ENCODE measurements at regions of chr14 and their contacts with region 1.

Region 1: DNA sequence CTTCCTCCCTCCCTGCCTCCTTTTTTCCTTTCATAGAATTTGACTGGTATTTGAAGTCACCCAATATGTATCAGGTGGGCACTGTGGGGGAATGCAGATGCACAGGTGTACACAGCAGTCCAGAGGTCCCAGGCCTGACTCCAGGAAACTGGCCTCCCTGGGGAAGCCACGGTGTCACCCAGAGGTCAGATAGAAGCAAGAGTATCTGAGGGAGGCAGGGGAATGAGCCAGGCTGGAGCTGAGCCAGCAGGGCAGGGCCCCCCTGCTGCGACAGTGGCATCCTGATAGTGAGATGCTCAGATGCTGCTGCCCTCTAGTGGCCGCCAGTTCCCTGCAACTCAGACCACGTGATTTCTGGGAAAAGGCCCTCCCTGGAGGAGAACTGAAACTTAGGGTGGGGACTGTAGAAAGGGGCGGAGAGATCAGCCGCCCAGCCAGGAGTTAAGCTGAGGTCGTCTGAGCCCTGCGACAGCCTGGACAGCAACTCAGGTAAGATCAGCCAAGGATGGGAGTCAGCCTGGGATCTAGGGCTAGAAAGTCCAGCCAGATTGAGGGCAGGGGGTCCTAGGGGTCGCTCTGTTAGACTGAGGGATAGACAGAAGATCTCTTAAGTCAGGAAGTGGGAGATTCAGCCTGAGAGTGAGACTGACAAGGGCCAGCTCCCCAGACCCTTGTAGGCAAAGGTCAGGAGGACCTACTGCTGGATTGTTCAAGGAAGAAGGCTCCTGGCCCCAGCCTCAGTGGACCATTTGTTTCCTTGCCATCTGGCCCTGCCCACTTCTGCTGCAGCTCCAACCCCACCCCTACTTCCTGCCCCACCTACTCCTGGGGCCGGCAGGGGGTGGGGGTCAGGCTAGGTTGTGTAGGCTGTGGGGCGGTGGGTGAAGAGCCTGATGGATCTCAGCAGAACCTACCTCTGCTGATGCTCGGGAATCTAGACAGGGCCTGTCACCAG is at the start of gene IRF9:
- DNase-seq: peak; percentile 94 to 97 (median 95)
- H3K4me3 ChIP-seq: peak within 1 kb of the TSS; percentile 73 to 97
- H3K4me3 Mint-ChIP-seq: peak within 1 kb of the TSS; percentile 96 to 100 (median 99)
- H3K27ac ChIP-seq: peak within 1 kb of the TSS; percentile 90
- H3K27ac Mint-ChIP-seq: peak within 1 kb of the TSS; percentile 97 to 100 (median 99)
- H3K4me1 ChIP-seq: peaks cover 50% of the 10 kb centered on the region
- H3K4me1 Mint-ChIP-seq: peaks cover 29 to 60% (median 48%) of the 10 kb centered on the region in 4 donors
- H3K27me3 ChIP-seq: no peaks in the 10 kb centered on the region
- H3K27me3 Mint-ChIP-seq: no peaks in the 10 kb centered on the region
- total RNA-seq, gene IRF9: 154 to 157 TPM

Region 2: GRCh38 chr14:22177870-22178269 is 1983.3 kb before region 1 on chr14:
- CTCF ChIA-PET with region 1: no interaction called
- POLR2A ChIA-PET with region 1: no interaction called
- intact Hi-C with region 1: no loop called
- DNase-seq: peak in 2 of 5 donors; percentile 21 to 25
- H3K4me3 ChIP-seq: no peak overlapping the region
- H3K4me3 Mint-ChIP-seq: peak overlapping the region in 5 of 8 donors; percentile 31 to 72 (median 64)
- H3K27ac ChIP-seq: no peak overlapping the region
- H3K27ac Mint-ChIP-seq: peak overlapping the region in 5 of 7 donors; percentile 22 to 82 (median 55)
- H3K4me1 ChIP-seq: peaks cover 8% of the 10 kb centered on the region
- H3K4me1 Mint-ChIP-seq: peaks cover 0 to 17% (median 11%) of the 10 kb centered on the region in 4 donors
- H3K27me3 ChIP-seq: no peaks in the 10 kb centered on the region
- H3K27me3 Mint-ChIP-seq: no peaks in the 10 kb centered on the region

Region 3: GRCh38 chr14:23621204-23621931 is 539.8 kb before region 1 on chr14:
- CTCF ChIA-PET with region 1: no interaction called
- POLR2A ChIA-PET with region 1: no interaction called
- intact Hi-C with region 1: no loop called
- DNase-seq: no peak
- H3K4me3 ChIP-seq: no peak overlapping the region
- H3K4me3 Mint-ChIP-seq: peak overlapping the region in 1 of 8 donors; percentile 37
- H3K27ac ChIP-seq: no peak overlapping the region
- H3K27ac Mint-ChIP-seq: no peak overlapping the region
- H3K4me1 ChIP-seq: no peaks in the 10 kb centered on the region
- H3K4me1 Mint-ChIP-seq: no peaks in the 10 kb centered on the region
- H3K27me3 ChIP-seq: no peaks in the 10 kb centered on the region
- H3K27me3 Mint-ChIP-seq: peaks cover 6 to 12% of the 10 kb centered on the region in 2 donors

Region 4: GRCh38 chr14:23929822-23930294 is 231.3 kb before region 1 on chr14:
- CTCF ChIA-PET with region 1: no interaction called
- POLR2A ChIA-PET with region 1: no interaction called
- intact Hi-C with region 1: no loop called
- DNase-seq: peak; percentile 67 to 73 (median 72)
- H3K4me3 ChIP-seq: no peak overlapping the region
- H3K4me3 Mint-ChIP-seq: no peak overlapping the region
- H3K27ac ChIP-seq: no peak overlapping the region
- H3K27ac Mint-ChIP-seq: no peak overlapping the region
- H3K4me1 ChIP-seq: no peaks in the 10 kb centered on the region
- H3K4me1 Mint-ChIP-seq: peaks cover 0 to 2% (median 0%) of the 10 kb centered on the region in 4 donors
- H3K27me3 ChIP-seq: no peaks in the 10 kb centered on the region
- H3K27me3 Mint-ChIP-seq: peaks cover 2 to 6% of the 10 kb centered on the region in 2 donors

Region 5: GRCh38 chr14:24058260-24058950 is 102.7 kb before region 1 on chr14:
- CTCF ChIA-PET with region 1: interaction called, 49 read pairs
- POLR2A ChIA-PET with region 1: interaction called, 18 read pairs
- intact Hi-C with region 1: loop called (anchors 1 kb)
- DNase-seq: peak; percentile 49 to 63 (median 61)
- H3K4me3 ChIP-seq: no peak overlapping the region
- H3K4me3 Mint-ChIP-seq: peak overlapping the region in 1 of 8 donors; percentile 59
- H3K27ac ChIP-seq: no peak overlapping the region
- H3K27ac Mint-ChIP-seq: peak overlapping the region in 6 of 7 donors; percentile 10 to 81 (median 36)
- H3K4me1 ChIP-seq: no peaks in the 10 kb centered on the region
- H3K4me1 Mint-ChIP-seq: peaks cover 2 to 8% (median 3%) of the 10 kb centered on the region in 4 donors
- H3K27me3 ChIP-seq: no peaks in the 10 kb centered on the region
- H3K27me3 Mint-ChIP-seq: peaks cover 2% of the 10 kb centered on the region in 2 donors

Region 6: DNA sequence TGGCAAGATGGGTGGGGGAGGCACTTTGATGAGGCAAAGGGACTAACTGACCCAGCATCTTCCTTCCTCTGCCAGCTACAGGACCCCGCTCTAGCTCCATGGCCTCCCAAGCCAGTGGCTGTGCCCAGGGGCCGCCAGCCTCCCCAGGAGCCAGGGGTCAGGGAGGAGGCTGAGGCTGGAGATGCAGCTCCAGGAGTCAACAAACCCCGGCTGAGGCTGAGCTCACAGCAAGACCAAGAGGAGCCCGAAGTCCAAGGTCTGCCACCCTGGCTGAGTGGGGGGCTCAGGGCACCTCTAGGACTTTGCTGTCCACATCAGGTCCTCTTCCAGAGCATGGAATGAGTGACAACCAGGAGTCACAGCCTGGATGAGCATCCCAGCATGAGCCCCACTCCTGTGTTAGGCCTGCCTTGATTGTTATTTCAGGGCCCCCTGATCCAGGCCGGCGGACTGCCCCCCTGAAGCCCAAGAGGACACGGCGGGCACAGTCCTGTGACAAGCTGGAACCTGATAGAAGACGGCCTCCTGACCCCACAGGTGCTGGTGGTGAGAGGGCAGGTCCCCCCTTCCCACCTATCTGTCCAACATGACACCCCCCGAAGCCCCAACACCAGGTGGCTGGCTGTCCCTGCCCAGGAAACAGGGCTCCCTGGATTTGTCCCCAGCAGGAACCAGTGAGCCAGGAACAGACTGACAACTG is 92.3 kb before region 1 on chr14:
- CTCF ChIA-PET with region 1: no interaction called
- POLR2A ChIA-PET with region 1: no interaction called
- intact Hi-C with region 1: no loop called
- DNase-seq: no peak
- H3K4me3 ChIP-seq: no peak overlapping the region
- H3K4me3 Mint-ChIP-seq: no peak overlapping the region
- H3K27ac ChIP-seq: no peak overlapping the region
- H3K27ac Mint-ChIP-seq: no peak overlapping the region
- H3K4me1 ChIP-seq: no peaks in the 10 kb centered on the region
- H3K4me1 Mint-ChIP-seq: peaks cover 0 to 2% (median 0%) of the 10 kb centered on the region in 4 donors
- H3K27me3 ChIP-seq: no peaks in the 10 kb centered on the region
- H3K27me3 Mint-ChIP-seq: peaks cover 7 to 14% of the 10 kb centered on the region in 2 donors

Region 7: DNA sequence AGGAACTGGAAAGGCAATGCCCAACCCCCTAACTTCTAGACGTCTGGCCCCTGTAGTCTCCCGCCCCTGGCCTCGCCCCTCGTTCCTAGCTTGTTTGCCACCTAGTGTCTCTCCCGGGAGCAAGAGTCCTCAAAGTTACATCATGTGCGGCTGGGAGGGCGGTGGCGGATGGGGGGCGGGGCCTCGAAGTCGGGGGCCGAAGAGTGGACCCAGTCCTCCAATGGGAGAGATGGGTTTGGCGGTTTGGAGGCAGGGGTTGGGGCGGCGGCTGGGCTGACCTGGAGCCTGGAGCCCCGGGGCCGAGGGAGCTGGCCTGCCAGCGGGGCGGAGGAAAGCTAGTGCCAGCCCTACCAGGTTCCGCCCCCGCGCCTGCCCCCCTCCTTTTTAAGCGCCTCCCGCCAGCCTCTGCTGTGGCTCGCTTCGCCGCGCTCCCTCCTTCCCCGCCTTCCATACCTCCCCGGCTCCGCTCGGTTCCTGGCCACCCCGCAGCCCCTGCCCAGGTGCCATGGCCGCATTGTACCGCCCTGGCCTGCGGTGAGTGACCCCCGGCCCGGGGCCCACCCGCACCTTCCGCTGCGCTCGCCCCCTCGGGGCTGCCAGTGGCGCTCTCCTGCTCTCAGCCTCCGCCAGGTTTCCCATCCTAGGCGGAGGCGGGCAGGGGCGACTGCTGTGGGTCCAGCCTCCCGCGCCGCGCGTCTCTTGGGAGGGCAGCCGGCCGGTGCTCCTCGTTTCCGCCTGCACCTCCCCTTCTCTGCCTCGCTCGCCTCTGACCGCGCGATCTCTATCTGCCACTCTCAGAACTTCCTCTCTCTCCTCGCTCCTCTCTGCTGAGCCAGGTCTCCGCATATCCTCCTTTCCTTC is 67.0 kb before region 1 on chr14 and contains the start of gene PCK2:
- CTCF ChIA-PET with region 1: interaction called, 15 read pairs
- POLR2A ChIA-PET with region 1: interaction called, 16 read pairs
- intact Hi-C with region 1: loop called (anchors 1 kb)
- DNase-seq: peak; percentile 53 to 75 (median 61)
- H3K4me3 ChIP-seq: peak within 1 kb of the TSS; percentile 82 to 90
- H3K4me3 Mint-ChIP-seq: peak within 1 kb of the TSS; percentile 91 to 100 (median 98)
- H3K27ac ChIP-seq: peak within 1 kb of the TSS; percentile 84
- H3K27ac Mint-ChIP-seq: peak within 1 kb of the TSS; percentile 84 to 98 (median 97)
- H3K4me1 ChIP-seq: peaks cover 26% of the 10 kb centered on the region
- H3K4me1 Mint-ChIP-seq: peaks cover 21 to 47% (median 33%) of the 10 kb centered on the region in 4 donors
- H3K27me3 ChIP-seq: no peaks in the 10 kb centered on the region
- H3K27me3 Mint-ChIP-seq: no peaks in the 10 kb centered on the region
- total RNA-seq, gene PCK2: 18.3 to 21.4 TPM

Region 8: GRCh38 chr14:24141097-24141880 is 19.8 kb before region 1 on chr14 and contains the start of gene EMC9:
- CTCF ChIA-PET with region 1: interaction called, 110 read pairs
- POLR2A ChIA-PET with region 1: interaction called, 162 read pairs
- intact Hi-C with region 1: loop called (anchors 1 kb)
- DNase-seq: peak; percentile 98 to 100 (median 99)
- H3K4me3 ChIP-seq: peak within 1 kb of the TSS; percentile 83 to 91
- H3K4me3 Mint-ChIP-seq: peak within 1 kb of the TSS; percentile 85 to 97 (median 94)
- H3K27ac ChIP-seq: peak within 1 kb of the TSS; percentile 77
- H3K27ac Mint-ChIP-seq: peak within 1 kb of the TSS; percentile 76 to 95 (median 94)
- H3K4me1 ChIP-seq: peaks cover 74% of the 10 kb centered on the region
- H3K4me1 Mint-ChIP-seq: peaks cover 38 to 94% (median 61%) of the 10 kb centered on the region in 4 donors
- H3K27me3 ChIP-seq: no peaks in the 10 kb centered on the region
- H3K27me3 Mint-ChIP-seq: no peaks in the 10 kb centered on the region
- total RNA-seq, gene EMC9: 33.0 to 33.9 TPM

Region 9: GRCh38 chr14:24171422-24172260 is 10.5 kb after region 1 on chr14 and contains the start of gene REC8:
- CTCF ChIA-PET with region 1: interaction called, 31 read pairs
- POLR2A ChIA-PET with region 1: interaction called, 23 read pairs
- intact Hi-C with region 1: loop called (anchors 1 kb)
- DNase-seq: peak; percentile 66 to 84 (median 73)
- H3K4me3 ChIP-seq: peak within 1 kb of the TSS in 1 of 2 donors; percentile 26
- H3K4me3 Mint-ChIP-seq: peak within 1 kb of the TSS; percentile 82 to 91 (median 87)
- H3K27ac ChIP-seq: peak within 1 kb of the TSS; percentile 42
- H3K27ac Mint-ChIP-seq: peak within 1 kb of the TSS; percentile 63 to 88 (median 85)
- H3K4me1 ChIP-seq: peaks cover 22% of the 10 kb centered on the region
- H3K4me1 Mint-ChIP-seq: peaks cover 20 to 56% (median 35%) of the 10 kb centered on the region in 4 donors
- H3K27me3 ChIP-seq: no peaks in the 10 kb centered on the region
- H3K27me3 Mint-ChIP-seq: no peaks in the 10 kb centered on the region
- total RNA-seq, gene REC8: 27.7 to 30.5 TPM

Region 10: DNA sequence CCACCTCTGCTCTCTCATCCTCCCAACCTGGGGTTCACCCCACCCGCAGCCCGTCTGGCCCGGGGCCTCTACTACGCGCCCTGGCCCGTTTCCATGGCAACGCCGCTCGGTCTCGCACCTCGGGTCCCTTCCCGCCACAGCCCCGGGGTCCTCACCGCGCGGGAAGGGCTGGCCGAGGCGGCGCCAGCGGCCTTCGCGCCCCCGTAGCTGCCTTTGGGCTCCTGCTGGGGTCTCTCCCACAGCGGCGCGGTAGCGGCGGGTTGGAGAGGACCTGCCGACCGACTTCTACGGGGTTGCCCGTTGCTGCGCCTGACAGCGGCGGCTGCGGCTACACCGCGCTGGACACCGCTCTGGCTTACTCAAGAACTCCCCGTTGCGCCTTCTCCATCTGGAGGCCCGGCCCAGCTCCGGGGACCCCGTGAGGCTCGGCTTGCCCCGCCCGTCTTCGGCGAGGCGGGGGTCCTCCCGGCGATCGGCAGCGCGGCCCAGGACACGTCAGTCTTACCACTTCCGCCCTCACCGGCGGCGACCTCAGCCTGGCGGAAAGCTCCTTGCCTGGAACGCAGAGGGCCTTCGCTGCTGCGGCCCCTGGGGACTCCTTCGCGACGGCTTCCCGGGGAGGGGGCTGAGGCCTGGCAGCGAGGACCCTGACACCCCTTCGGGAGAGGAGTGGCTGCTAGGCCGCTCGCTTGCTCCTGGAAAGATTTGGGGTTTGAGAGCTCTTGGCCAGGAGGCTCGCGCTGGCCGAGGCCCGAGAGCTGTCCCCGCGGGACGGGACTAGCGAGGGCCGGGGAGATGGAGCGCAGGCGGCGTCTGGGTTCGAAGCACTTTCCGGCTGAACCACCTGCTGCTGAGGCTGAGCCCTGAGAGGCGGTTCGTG is 34.3 kb after region 1 on chr14 and contains the start of gene TM9SF1:
- CTCF ChIA-PET with region 1: interaction called, 8 read pairs
- POLR2A ChIA-PET with region 1: interaction called, 39 read pairs
- intact Hi-C with region 1: loop called (anchors 1 kb)
- DNase-seq: peak; percentile 89 to 92 (median 92)
- H3K4me3 ChIP-seq: peak within 1 kb of the TSS; percentile 87 to 90
- H3K4me3 Mint-ChIP-seq: peak within 1 kb of the TSS; percentile 93 to 98 (median 94)
- H3K27ac ChIP-seq: peak within 1 kb of the TSS; percentile 98
- H3K27ac Mint-ChIP-seq: peak within 1 kb of the TSS; percentile 92 to 99 (median 98)
- H3K4me1 ChIP-seq: peaks cover 37% of the 10 kb centered on the region
- H3K4me1 Mint-ChIP-seq: peaks cover 31 to 65% (median 48%) of the 10 kb centered on the region in 4 donors
- H3K27me3 ChIP-seq: no peaks in the 10 kb centered on the region
- H3K27me3 Mint-ChIP-seq: no peaks in the 10 kb centered on the region
- total RNA-seq, gene TM9SF1: 24.1 to 26.3 TPM

Measured in CD4-positive, alpha-beta memory T cell (primary cell).